Heart left ventricle (tissue), 16 donors: ENCODE measurements at regions of chr17 and their contacts with region 1.

Region 1: GRCh38 chr17:31842183-31843069 is 16.6 kb downstream of the COPRS start:
- DNase-seq: peak; percentile 66 to 78 (median 69)
- ATAC-seq: peak; percentile 72 to 92 (median 85)
- H3K4me3 ChIP-seq: peak overlapping the region in 8 of 12 donors; percentile 6 to 40 (median 22)
- H3K27ac ChIP-seq: peak overlapping the region in 7 of 12 donors; percentile 2 to 62 (median 37)
- H3K4me1 ChIP-seq: peaks cover 0 to 25% (median 13%) of the 10 kb centered on the region in 12 donors
- H3K27me3 ChIP-seq: no peaks in the 10 kb centered on the region
- CTCF ChIP-seq: peak; percentile 89 to 99 (median 98)
- POLR2A ChIP-seq: no peak

Region 2: DNA sequence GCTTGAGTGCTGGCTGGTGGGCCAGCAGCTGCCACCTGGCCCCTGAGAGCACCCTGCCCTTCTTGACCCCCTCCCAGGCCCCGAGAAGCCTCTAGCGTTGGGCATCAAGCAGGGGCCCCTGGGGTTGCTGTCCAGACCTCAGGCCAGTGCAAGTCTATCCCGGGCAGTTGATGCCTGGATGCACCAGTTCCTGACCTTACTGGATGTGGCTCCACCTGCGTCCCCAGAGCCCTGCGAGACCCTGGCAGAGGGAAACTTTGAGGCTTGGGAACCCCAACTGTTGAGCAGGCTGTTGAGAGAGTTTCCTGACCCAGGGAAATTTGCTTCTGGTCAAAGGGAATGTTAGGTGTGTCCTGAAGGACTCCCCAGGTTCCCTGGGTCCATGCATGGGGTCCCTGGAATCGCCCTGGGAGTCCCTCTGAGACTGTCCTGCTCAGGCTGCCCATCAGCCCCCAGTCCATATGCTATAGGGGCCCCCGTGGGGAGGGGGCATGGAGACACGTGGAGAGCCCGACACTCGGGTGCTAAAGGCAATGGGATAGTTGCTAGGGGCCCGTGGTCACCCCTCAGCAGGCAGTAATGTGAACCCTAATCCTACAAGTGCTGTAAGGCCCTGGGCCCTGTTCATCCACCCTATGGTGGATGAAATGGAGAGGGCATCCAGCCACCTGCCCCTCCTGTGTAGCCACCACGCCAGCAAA is 404.6 kb before region 1 on chr17:
- intact Hi-C with region 1: loop called in 9 of 10 experiments (anchors 1 to 5 kb)
- DNase-seq: no peak
- ATAC-seq: peak; percentile 9 to 25 (median 15)
- H3K4me3 ChIP-seq: no peak overlapping the region
- H3K27ac ChIP-seq: no peak overlapping the region
- H3K4me1 ChIP-seq: peaks cover 0 to 6% (median 0%) of the 10 kb centered on the region in 12 donors
- H3K27me3 ChIP-seq: peaks cover 0 to 3% (median 0%) of the 10 kb centered on the region in 9 donors
- CTCF ChIP-seq: no peak
- POLR2A ChIP-seq: no peak

Region 3: DNA sequence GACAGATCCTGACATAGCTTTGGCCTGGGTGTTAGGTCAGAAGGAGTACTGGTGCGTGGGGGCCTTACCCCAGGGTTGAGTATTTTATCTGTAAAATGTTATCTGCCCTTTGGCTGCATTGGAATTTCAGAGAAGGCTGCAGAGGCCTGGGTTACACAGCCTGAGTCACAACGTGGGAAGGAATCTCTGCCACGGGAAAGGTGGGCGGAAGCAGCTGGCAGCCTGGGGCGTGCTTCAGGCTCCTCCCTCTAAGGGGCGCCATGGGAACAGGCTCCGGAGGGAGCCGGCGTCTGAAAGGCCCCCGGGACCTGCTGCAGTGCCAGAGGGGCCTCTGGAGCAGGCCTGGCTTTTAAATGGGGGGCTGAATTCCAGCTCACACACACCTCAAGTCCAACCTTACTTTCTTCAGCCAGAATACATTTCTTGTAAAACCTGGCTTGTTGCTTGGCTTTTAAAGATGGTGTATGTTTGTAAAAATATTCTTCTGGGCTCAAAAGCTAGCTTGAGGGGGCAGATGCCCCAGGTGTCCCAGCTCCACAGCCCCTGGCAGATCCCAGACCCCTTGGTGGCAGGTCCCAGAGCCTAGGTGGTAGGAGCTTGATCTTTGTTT is 308.8 kb before region 1 on chr17:
- intact Hi-C with region 1: loop called in 1 of 10 experiments (anchors 10 kb)
- DNase-seq: peak in 1 of 5 donors; percentile 59
- ATAC-seq: peak in 3 of 4 donors; percentile 64 to 77 (median 66)
- H3K4me3 ChIP-seq: no peak overlapping the region
- H3K27ac ChIP-seq: no peak overlapping the region
- H3K4me1 ChIP-seq: peaks cover 0 to 8% (median 3%) of the 10 kb centered on the region in 12 donors
- H3K27me3 ChIP-seq: no peaks in the 10 kb centered on the region
- CTCF ChIP-seq: peak in 9 of 12 donors; percentile 20 to 54 (median 37)
- POLR2A ChIP-seq: no peak

Region 4: GRCh38 chr17:31558748-31559644 is 283.4 kb before region 1 on chr17:
- intact Hi-C with region 1: loop called (anchors 1 to 2 kb)
- DNase-seq: peak; percentile 83 to 89 (median 84)
- ATAC-seq: peak; percentile 70 to 94 (median 88)
- H3K4me3 ChIP-seq: peak overlapping the region; percentile 51 to 79 (median 64)
- H3K27ac ChIP-seq: peak overlapping the region; percentile 65 to 96 (median 92)
- H3K4me1 ChIP-seq: peaks cover 0 to 43% (median 32%) of the 10 kb centered on the region in 12 donors
- H3K27me3 ChIP-seq: no peaks in the 10 kb centered on the region
- CTCF ChIP-seq: peak; percentile 56 to 98 (median 92)
- POLR2A ChIP-seq: peak in 1 of 2 donors; percentile 60

Region 5: DNA sequence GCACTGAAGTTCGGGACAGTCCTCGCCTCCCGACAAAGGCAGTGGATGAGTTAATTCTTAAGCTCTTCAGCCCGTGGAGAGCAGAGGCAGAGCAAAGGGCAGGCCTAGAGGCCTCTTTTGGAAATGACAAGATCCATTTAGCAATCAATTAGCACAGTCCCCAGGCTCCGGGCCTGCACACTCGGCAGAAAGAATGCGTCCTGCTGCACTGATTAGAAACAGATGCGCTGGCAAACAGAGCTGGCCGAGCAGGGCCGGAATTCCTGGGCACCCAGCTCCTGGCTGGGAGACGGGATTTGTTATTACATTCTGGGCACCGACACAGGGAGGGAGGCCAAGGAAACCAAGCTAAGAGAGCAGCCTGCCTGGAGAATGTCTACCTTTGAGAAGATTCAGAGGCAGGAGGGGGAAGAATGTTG is 146.2 kb before region 1 on chr17:
- intact Hi-C with region 1: loop called in 4 of 10 experiments (anchors 5 to 10 kb)
- DNase-seq: peak; percentile 83 to 94 (median 84)
- ATAC-seq: peak; percentile 94 to 96 (median 94)
- H3K4me3 ChIP-seq: no peak overlapping the region
- H3K27ac ChIP-seq: peak overlapping the region; percentile 31 to 84 (median 76)
- H3K4me1 ChIP-seq: peaks cover 0 to 56% (median 35%) of the 10 kb centered on the region in 12 donors
- H3K27me3 ChIP-seq: no peaks in the 10 kb centered on the region
- CTCF ChIP-seq: peak in 6 of 12 donors; percentile 23 to 37 (median 29)
- POLR2A ChIP-seq: no peak